ENCODE measurements at regions of chr3 and their contacts with region 1.

Region 1: DNA sequence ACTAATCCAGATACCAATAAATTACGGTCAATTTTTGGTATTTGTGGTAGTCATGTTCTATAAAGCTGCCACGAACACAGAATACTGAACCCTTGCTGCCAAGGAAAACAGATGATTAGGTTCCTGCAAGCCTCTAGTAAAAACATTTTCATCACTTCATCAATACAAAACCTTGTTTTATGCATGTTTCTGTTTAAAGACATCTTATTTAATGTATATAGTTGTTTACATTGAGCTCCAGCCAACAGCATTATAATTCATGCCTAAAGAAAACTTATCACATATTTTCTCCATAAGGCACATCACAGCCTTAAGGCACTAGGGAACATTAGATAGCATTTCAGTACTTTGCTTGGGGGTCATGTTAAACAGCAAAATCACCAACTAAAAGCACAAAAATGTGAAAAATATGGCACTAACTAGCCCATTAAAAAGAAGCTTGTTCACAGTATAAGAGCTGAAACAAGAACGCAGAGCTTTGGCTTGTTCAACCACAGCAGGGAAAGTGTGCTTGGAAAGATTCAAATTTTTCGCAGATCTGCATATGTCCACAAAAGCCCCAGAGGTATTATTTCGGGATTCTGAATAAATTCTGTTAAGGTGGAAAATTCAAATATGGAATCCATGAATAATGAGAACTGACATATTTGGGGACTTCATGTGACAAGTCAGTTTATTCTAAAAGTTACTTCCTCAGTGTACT is 27.7 kb downstream of the POLQ start:
- DNase-seq: no peak
- ATAC-seq: no peak
- H3K4me3 ChIP-seq: no peak overlapping the region
- H3K4me3 Mint-ChIP-seq: no peak overlapping the region
- H3K27ac ChIP-seq: no peak overlapping the region
- H3K27ac Mint-ChIP-seq: no peak overlapping the region
- H3K4me1 ChIP-seq: no peaks in the 10 kb centered on the region
- H3K4me1 Mint-ChIP-seq: no peaks in the 10 kb centered on the region
- H3K27me3 ChIP-seq: no peaks in the 10 kb centered on the region
- H3K27me3 Mint-ChIP-seq: no peaks in the 10 kb centered on the region
- CTCF ChIP-seq: no peak

Region 2: GRCh38 chr3:119664850-119665379 is 1853.2 kb before region 1 on chr3:
- CTCF ChIA-PET with region 1: no interaction called
- POLR2A ChIA-PET with region 1: interaction called, 10 read pairs
- intact Hi-C with region 1: no loop called
- DNase-seq: peak; percentile 46
- ATAC-seq: peak; percentile 24
- H3K4me3 ChIP-seq: no peak overlapping the region
- H3K4me3 Mint-ChIP-seq: no peak overlapping the region
- H3K27ac ChIP-seq: peak overlapping the region; percentile 8 to 50
- H3K27ac Mint-ChIP-seq: peak overlapping the region; percentile 81
- H3K4me1 ChIP-seq: peaks cover 9 to 15% of the 10 kb centered on the region in 2 donors
- H3K4me1 Mint-ChIP-seq: peaks cover 43% of the 10 kb centered on the region
- H3K27me3 ChIP-seq: no peaks in the 10 kb centered on the region
- H3K27me3 Mint-ChIP-seq: no peaks in the 10 kb centered on the region
- CTCF ChIP-seq: no peak

Region 3: DNA sequence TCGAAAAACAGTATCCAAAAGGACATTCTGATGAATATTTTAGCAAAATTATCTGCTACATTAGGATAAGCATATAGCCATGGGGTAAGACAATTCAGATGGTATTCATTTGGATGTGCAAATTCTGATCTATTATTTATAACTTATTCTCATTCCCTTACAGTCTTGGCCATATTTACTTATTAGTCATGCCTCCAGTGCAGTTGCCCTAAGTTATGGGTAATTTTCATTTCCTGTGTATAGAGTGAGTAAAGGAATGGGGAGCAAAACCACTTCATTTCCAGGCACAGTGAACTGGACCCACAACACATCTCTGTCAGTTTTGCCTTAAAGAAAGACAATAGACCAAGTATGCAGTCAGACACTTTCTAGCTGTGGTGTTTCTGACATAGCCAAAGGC is 106.6 kb before region 1 on chr3:
- CTCF ChIA-PET with region 1: no interaction called
- POLR2A ChIA-PET with region 1: no interaction called
- intact Hi-C with region 1: no loop called
- DNase-seq: no peak
- ATAC-seq: no peak
- H3K4me3 ChIP-seq: no peak overlapping the region
- H3K4me3 Mint-ChIP-seq: no peak overlapping the region
- H3K27ac ChIP-seq: no peak overlapping the region
- H3K27ac Mint-ChIP-seq: no peak overlapping the region
- H3K4me1 ChIP-seq: no peaks in the 10 kb centered on the region
- H3K4me1 Mint-ChIP-seq: no peaks in the 10 kb centered on the region
- H3K27me3 ChIP-seq: no peaks in the 10 kb centered on the region
- H3K27me3 Mint-ChIP-seq: no peaks in the 10 kb centered on the region
- CTCF ChIP-seq: no peak

Region 4: GRCh38 chr3:121542924-121543323 is 24.8 kb after region 1 on chr3:
- CTCF ChIA-PET with region 1: no interaction called
- POLR2A ChIA-PET with region 1: no interaction called
- intact Hi-C with region 1: no loop called
- DNase-seq: no peak
- ATAC-seq: no peak
- H3K4me3 ChIP-seq: no peak overlapping the region
- H3K4me3 Mint-ChIP-seq: no peak overlapping the region
- H3K27ac ChIP-seq: no peak overlapping the region
- H3K27ac Mint-ChIP-seq: no peak overlapping the region
- H3K4me1 ChIP-seq: peaks cover 8 to 11% of the 10 kb centered on the region in 2 donors
- H3K4me1 Mint-ChIP-seq: peaks cover 17% of the 10 kb centered on the region
- H3K27me3 ChIP-seq: no peaks in the 10 kb centered on the region
- H3K27me3 Mint-ChIP-seq: no peaks in the 10 kb centered on the region
- CTCF ChIP-seq: no peak